ENCODE measurements at regions of chr9 and their contacts with region 1.

Region 1: DNA sequence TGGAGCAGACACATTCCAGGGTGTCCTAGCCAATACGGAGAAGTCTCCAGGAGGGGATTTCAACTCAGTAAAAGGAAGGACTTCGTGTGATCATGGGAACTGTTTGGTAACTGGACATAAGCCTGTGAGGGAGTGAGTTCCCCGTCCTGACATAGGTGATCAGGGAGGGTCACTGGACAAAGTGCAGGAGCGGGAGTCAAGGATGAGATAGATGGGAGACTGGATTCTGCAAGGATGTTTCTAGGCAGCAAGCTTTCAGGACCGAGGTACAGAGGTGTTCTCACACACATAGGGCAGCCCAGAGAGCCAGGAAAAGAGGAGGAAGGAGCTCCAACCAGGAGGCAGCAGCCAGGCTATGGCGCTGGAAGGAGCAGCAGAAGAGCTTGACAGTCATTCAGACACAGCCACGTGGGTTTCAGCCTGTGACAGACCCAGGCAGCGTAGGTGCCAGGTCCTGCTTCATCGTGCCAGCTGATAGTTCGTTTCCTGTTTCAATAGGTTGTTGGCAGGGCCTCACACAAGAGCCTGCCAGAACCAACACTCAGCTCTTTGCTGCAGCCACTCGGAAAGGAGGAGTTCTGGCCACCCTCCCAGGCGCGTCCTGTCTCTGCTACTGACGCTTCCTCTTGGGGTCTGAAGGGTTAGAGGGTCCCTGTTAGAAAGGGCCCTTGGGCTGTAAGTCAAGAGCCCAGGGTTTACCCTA is 84.1 kb downstream of the AMBP start:
- DNase-seq: peak; percentile 56 to 95 (median 68)

Region 2: DNA sequence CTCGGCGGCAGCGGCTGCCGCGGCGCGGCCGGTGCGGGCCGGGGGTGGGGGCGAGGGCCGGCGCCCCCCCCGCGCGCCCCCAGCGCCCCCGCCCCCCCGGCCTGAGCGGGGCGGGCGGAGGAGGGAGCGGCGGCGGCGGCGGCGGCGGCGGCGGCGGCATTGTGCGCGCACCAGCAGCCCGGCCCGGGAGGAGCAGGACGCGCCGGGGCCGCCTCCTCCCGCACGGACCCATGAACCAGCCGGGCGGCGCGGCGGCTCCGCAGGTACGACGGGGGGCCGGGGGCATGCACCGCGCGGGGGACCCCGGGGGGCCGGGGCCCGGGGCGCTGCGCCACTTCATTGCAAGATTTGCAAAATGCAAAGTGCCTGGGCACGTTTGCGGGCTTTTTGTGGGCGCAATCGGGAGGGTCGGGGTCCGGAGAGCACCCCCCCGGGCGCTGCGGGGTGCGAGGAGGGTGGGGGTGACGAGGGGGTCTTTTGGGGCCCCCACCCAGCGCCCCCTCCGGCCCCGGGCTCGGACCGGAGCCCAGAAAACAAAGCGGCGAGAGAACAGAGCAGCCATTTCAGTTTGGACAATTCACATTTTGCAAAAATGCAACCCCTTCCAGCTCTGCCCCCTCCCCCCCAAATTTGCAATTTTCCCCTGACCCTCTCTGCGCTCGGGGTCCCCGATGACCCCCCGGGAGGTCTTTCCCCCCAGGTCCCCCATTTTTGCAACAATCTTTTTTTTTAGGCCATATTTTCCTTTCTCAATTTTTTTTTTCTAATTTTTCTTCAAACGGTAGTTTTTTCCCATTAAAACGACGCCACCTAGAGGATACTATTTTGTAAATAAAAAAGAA is 117.6 kb before region 1 on chr9 and contains the start of gene ZNF618:
- intact Hi-C with region 1: loop called (anchors 5 kb)
- DNase-seq: peak in 4 of 10 donors; percentile 7 to 85 (median 65)